WTC11 (cell line): ENCODE measurements at regions of chr22 and their contacts with region 1.

Region 1: GRCh38 chr22:30289134-30289979 is at the start of gene CASTOR1:
- DNase-seq: peak; percentile 99
- ATAC-seq: peak; percentile 87
- H3K4me3 Mint-ChIP-seq: peak within 1 kb of the TSS; percentile 80
- H3K27ac Mint-ChIP-seq: peak within 1 kb of the TSS; percentile 93
- H3K4me1 Mint-ChIP-seq: peaks cover 11% of the 10 kb centered on the region
- H3K27me3 Mint-ChIP-seq: peaks cover 3% of the 10 kb centered on the region
- CTCF ChIP-seq: no peak
- total RNA-seq, gene CASTOR1: 15.8 to 18.6 TPM (median 16.0 TPM) in 3 replicates

Region 2: DNA sequence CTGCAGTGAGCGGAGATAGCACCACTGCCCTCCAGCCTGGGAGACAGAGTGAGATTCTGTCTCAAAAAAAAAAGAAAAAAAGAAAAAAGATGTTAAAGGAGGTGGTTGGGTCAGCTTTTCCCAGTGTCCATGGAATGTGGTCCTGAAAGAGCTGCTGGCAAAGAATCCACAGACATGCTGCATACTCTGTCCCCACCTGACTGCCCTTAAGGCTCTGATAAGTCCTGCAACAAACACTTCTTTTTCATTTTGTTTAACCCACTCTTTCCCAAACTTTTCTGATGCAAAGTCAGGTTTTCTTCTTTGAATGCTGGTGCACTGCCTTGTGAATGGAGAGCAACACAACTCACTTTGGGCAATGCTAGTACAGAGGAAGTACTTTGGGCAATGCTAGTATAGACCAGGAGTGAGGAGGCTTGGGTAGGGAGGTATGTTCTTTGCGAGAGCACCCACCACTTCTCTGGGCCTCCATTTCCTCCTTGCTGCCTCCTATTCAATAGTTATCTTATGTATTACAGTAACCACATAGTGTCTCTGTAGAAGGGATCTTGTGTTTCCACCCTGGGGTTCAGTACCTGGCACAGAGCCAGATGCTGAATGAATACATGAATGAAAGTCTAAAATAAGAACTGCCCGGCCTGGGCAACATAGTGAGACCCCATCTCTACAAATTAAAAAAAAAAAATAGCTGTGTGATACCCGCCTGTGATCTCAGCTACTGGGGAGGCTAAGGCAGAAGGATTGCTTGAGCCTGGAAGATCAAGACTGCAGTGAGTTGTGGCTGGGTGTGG is 61.7 kb before region 1 on chr22:
- CTCF ChIA-PET with region 1: no interaction called
- POLR2A ChIA-PET with region 1: no interaction called
- DNase-seq: no peak
- ATAC-seq: no peak
- H3K4me3 Mint-ChIP-seq: no peak overlapping the region
- H3K27ac Mint-ChIP-seq: no peak overlapping the region
- H3K4me1 Mint-ChIP-seq: peaks cover 21% of the 10 kb centered on the region
- H3K27me3 Mint-ChIP-seq: no peaks in the 10 kb centered on the region
- CTCF ChIP-seq: no peak

Region 3: DNA sequence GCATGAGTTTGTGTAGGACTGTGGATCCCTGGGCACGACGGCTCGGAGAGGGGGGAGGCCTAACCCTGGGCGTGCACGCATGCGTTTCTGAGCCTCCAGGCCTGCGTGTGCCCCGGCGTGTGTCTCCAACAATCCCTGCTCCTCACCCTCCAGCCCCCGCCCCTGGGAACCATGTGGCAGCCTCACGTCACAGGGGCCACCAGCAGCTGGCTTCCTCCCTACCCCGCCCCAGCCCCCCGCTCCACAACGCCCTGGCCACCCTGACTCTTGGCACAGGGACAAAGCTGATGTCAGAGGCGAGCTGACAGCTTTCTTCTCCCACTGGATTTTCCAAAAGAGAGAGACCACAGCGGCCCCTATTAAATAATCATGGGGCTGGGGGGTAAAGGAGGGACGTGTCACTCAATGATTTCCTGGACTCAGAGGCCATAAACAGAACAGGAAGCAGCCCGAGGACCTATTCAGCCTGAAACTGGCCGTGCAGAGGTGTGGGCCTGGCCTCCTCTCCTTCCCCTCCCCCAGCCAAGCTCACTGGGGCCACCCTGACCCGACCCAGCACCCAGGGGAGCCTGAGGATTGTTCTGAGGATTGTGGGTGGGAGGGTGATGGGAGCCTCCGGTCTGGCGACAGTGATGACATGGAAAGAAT is 36.0 kb before region 1 on chr22:
- CTCF ChIA-PET with region 1: interaction called, 48 read pairs
- POLR2A ChIA-PET with region 1: no interaction called
- DNase-seq: no peak
- ATAC-seq: no peak
- H3K4me3 Mint-ChIP-seq: no peak overlapping the region
- H3K27ac Mint-ChIP-seq: peak overlapping the region; percentile 65
- H3K4me1 Mint-ChIP-seq: peaks cover 35% of the 10 kb centered on the region
- H3K27me3 Mint-ChIP-seq: peaks cover 3% of the 10 kb centered on the region; the same call in 1 of the 2 replicates
- CTCF ChIP-seq: no peak

Region 4: GRCh38 chr22:30277547-30278344 is 11.6 kb before region 1 on chr22:
- CTCF ChIA-PET with region 1: interaction called, 29 read pairs
- POLR2A ChIA-PET with region 1: interaction called, 3 read pairs
- DNase-seq: no peak
- ATAC-seq: no peak
- H3K4me3 Mint-ChIP-seq: no peak overlapping the region
- H3K27ac Mint-ChIP-seq: no peak overlapping the region
- H3K4me1 Mint-ChIP-seq: peaks cover 8% of the 10 kb centered on the region
- H3K27me3 Mint-ChIP-seq: no peaks in the 10 kb centered on the region; the same call in 1 of the 2 replicates
- CTCF ChIP-seq: no peak

Region 5: DNA sequence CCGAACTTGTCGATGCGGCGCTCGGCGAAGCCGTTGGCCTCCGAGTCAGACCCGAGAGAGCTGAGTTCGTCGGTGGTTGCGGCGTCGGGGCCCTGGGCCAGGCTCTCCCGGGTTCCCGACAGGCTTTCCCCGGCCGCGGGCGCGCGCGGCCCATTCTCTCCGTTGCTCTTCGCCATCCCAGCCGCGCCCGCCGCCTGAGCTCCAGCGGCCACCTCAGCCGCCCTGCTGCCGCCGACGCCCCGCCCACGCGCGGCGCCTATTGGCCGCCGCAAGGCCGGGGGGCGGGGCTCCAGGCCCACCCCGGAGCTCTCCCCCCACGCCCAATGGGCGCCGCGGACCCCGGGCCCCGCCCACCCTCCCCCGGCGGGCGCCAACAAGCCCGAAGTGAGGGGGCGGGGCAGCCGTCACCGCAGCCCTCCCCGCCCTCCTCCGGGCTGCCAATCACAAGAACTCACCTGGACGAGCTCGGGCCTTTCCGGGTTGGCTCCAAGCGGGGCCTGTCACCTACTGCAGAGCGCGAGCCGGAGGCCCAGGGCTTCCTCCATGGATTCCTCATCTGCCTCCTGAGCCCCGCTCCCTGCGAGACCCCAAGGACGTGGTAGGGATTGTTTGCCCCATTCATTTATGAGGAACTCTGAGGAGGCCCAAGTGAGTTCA is 37.5 kb after region 1 on chr22 and contains the start of gene TBC1D10A:
- CTCF ChIA-PET with region 1: interaction called, 193 read pairs
- POLR2A ChIA-PET with region 1: interaction called, 7 read pairs
- DNase-seq: peak; percentile 95
- ATAC-seq: peak; percentile 93
- H3K4me3 Mint-ChIP-seq: peak within 1 kb of the TSS; percentile 75
- H3K27ac Mint-ChIP-seq: peak within 1 kb of the TSS; percentile 89
- H3K4me1 Mint-ChIP-seq: peaks cover 28% of the 10 kb centered on the region
- H3K27me3 Mint-ChIP-seq: no peaks in the 10 kb centered on the region
- CTCF ChIP-seq: no peak
- total RNA-seq, gene TBC1D10A: 7.5 to 11.1 TPM (median 9.6 TPM) in 3 replicates

Region 6: GRCh38 chr22:30386960-30387827 is 97.8 kb after region 1 on chr22 and contains the start of gene RNF215:
- CTCF ChIA-PET with region 1: interaction called, 109 read pairs
- POLR2A ChIA-PET with region 1: interaction called, 7 read pairs
- DNase-seq: peak; percentile 96
- ATAC-seq: peak; percentile 83
- H3K4me3 Mint-ChIP-seq: peak within 1 kb of the TSS; percentile 79
- H3K27ac Mint-ChIP-seq: peak within 1 kb of the TSS; percentile 96
- H3K4me1 Mint-ChIP-seq: peaks cover 14% of the 10 kb centered on the region
- H3K27me3 Mint-ChIP-seq: peaks cover 11% of the 10 kb centered on the region
- CTCF ChIP-seq: peak; percentile 96
- total RNA-seq, gene RNF215: 25.4 to 28.6 TPM (median 27.6 TPM) in 3 replicates